ENCODE measurements at regions of chr14 and their contacts with region 1.

Region 1: GRCh38 chr14:74762917-74763802 is at the start of gene YLPM1:
- DNase-seq: peak; percentile 79 to 97 (median 95)
- ATAC-seq: peak; percentile 98
- H3K4me3 ChIP-seq: peak within 1 kb of the TSS; percentile 58
- H3K4me3 Mint-ChIP-seq: peak within 1 kb of the TSS; percentile 86 to 99 (median 95)
- H3K27ac ChIP-seq: peak within 1 kb of the TSS; percentile 93
- H3K27ac Mint-ChIP-seq: peak within 1 kb of the TSS; percentile 87 to 97 (median 95)
- H3K4me1 ChIP-seq: peaks cover 31 to 38% of the 10 kb centered on the region in 2 donors
- H3K4me1 Mint-ChIP-seq: peaks cover 43 to 56% (median 49%) of the 10 kb centered on the region in 7 donors
- H3K27me3 ChIP-seq: no peaks in the 10 kb centered on the region
- H3K27me3 Mint-ChIP-seq: peaks cover 0 to 2% (median 0%) of the 10 kb centered on the region in 5 donors
- total RNA-seq, gene YLPM1: 84.7 to 119 (median 109) TPM

Region 2: DNA sequence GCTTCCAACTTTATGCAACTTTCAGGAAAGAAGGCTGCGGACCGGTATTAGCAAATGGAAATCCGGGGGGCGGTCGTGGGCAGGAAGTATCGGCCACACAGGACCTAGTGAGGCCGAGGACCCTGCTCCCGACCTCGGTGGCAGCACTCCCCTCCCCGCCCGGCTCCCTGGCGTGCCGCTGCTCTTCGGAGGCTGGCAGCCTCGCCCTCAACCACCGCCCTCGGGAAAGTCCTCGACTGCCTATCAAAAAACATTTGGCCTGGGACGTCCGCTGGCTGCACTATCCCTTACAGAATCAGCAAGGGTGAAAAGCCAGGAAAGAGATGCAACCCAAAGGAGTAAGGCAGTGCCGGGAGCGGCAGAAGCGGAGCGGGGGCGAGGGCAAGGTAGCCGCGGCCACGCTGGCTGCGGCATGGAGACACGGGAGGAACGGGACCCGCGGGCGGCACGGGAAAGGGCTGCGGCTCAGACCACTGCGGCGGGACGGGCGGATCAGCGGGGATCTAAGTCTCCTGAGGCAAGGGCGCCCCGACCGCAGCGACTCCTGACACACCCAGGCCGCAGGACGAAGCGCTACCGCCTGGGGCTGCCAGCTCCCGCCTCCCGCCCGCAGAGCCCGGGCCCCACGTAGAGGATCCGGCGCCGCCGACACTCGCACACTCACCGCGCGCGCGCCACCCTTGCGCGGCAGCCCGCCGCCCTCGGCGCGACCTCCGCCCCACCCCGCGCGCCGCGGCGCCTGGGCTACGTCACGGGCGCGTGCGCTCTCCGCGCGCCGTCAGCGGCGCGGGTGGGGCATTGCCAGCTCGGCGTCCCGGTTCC is 744.4 kb before region 1 on chr14 and contains the starts of genes BBOF1 and ENTPD5:
- CTCF ChIA-PET with region 1: no interaction called
- POLR2A ChIA-PET with region 1: no interaction called
- intact Hi-C with region 1: loop called in 1 of 2 experiments (anchors 1 kb)
- DNase-seq: peak; percentile 83 to 89 (median 88)
- ATAC-seq: peak; percentile 98
- H3K4me3 ChIP-seq: peak within 1 kb of the TSS; percentile 79
- H3K4me3 Mint-ChIP-seq: peak within 1 kb of the TSS; percentile 80 to 97 (median 94)
- H3K27ac ChIP-seq: peak within 1 kb of the TSS; percentile 93
- H3K27ac Mint-ChIP-seq: peak within 1 kb of the TSS; percentile 89 to 98 (median 96)
- H3K4me1 ChIP-seq: peaks cover 6 to 10% of the 10 kb centered on the region in 2 donors
- H3K4me1 Mint-ChIP-seq: peaks cover 7 to 24% (median 14%) of the 10 kb centered on the region in 7 donors
- H3K27me3 ChIP-seq: no peaks in the 10 kb centered on the region
- H3K27me3 Mint-ChIP-seq: peaks cover 0 to 2% (median 0%) of the 10 kb centered on the region in 5 donors
- total RNA-seq, gene BBOF1: 0.80 to 4.0 (median 2.6) TPM
- total RNA-seq, gene ENTPD5: 8.6 to 17.1 (median 11.2) TPM

Region 3: DNA sequence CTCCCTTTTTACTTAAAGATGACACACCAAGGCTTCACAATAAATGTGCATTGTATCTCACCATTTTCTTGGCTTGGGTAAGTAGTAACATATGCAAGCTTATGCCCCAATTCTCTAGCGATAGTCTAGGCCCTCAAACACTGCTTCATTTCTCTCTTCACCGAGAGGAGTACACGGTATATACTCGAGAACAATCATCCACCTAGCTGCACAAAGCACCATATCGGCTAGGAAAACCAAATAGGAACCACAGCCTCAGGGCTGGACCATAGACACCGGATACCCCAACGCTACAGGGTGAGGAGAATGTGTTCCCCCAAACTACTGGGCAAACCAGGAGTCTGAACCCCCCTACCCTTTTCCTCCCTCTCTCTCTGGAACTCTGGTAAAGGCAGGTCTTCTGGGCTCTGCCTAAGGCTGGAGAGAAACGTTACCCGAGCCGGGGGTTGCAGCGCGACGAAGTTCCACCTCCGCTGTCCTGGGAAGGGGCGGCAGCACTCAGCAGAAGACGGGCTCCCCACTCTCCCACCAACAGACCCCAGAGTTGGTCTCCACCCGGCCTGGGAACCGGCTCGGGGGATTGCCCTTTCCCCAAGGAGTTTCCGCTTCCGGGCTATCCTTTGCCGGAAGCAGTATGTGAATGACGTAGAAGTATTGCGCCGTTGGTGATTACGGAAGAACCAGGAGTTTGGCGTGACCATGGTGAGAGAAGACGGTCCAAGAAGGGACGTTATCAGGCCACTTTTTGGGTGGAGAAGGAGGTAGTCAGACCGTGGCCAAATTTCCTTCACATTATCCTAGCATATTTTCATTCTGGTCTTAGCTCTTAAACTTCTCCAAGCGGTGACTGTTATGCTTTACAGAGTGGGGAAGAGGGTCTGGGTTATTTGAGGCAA is 50.4 kb before region 1 on chr14 and contains the starts of genes AREL1 and FCF1:
- CTCF ChIA-PET with region 1: no interaction called
- POLR2A ChIA-PET with region 1: interaction called, 5 read pairs
- intact Hi-C with region 1: loop called (anchors 1 kb)
- DNase-seq: peak; percentile 53 to 87 (median 82)
- ATAC-seq: peak; percentile 96
- H3K4me3 ChIP-seq: peak within 1 kb of the TSS; percentile 75
- H3K4me3 Mint-ChIP-seq: peak within 1 kb of the TSS; percentile 93 to 100 (median 97)
- H3K27ac ChIP-seq: peak within 1 kb of the TSS; percentile 96
- H3K27ac Mint-ChIP-seq: peak within 1 kb of the TSS; percentile 95 to 100 (median 98)
- H3K4me1 ChIP-seq: peaks cover 9 to 24% of the 10 kb centered on the region in 2 donors
- H3K4me1 Mint-ChIP-seq: peaks cover 33 to 79% (median 66%) of the 10 kb centered on the region in 7 donors
- H3K27me3 ChIP-seq: no peaks in the 10 kb centered on the region
- H3K27me3 Mint-ChIP-seq: no peaks in the 10 kb centered on the region
- total RNA-seq, gene AREL1: 35.6 to 52.0 (median 43.5) TPM
- total RNA-seq, gene FCF1: 36.5 to 66.6 (median 60.8) TPM

Region 4: GRCh38 chr14:74838166-74838565 is 75.0 kb after region 1 on chr14:
- CTCF ChIA-PET with region 1: interaction called, 4 read pairs
- POLR2A ChIA-PET with region 1: interaction called, 8 read pairs
- intact Hi-C with region 1: loop called (anchors 1 kb)
- DNase-seq: peak in 7 of 9 donors; percentile 34 to 62 (median 46)
- ATAC-seq: peak; percentile 75
- H3K4me3 ChIP-seq: no peak overlapping the region
- H3K4me3 Mint-ChIP-seq: peak overlapping the region; percentile 30 to 87 (median 82)
- H3K27ac ChIP-seq: peak overlapping the region; percentile 72
- H3K27ac Mint-ChIP-seq: peak overlapping the region; percentile 80 to 99 (median 95)
- H3K4me1 ChIP-seq: peaks cover 48 to 65% of the 10 kb centered on the region in 2 donors
- H3K4me1 Mint-ChIP-seq: peaks cover 47 to 94% (median 86%) of the 10 kb centered on the region in 7 donors
- H3K27me3 ChIP-seq: no peaks in the 10 kb centered on the region
- H3K27me3 Mint-ChIP-seq: no peaks in the 10 kb centered on the region